Activated naive CD4-positive, alpha-beta T cell treated with anti-CD3 and anti-CD28 coated beads for 36 hours (primary cell): ENCODE measurements at regions of chrX and their contacts with region 1.

Region 1: GRCh38 chrX:22192417-22193060 is 80.2 kb upstream of the CBLL2 start:
- DNase-seq: peak; percentile 71
- H3K4me3 Mint-ChIP-seq: no peak overlapping the region
- H3K27ac Mint-ChIP-seq: no peak overlapping the region
- H3K4me1 Mint-ChIP-seq: peaks cover 3% of the 10 kb centered on the region
- H3K27me3 Mint-ChIP-seq: no peaks in the 10 kb centered on the region

Region 2: DNA sequence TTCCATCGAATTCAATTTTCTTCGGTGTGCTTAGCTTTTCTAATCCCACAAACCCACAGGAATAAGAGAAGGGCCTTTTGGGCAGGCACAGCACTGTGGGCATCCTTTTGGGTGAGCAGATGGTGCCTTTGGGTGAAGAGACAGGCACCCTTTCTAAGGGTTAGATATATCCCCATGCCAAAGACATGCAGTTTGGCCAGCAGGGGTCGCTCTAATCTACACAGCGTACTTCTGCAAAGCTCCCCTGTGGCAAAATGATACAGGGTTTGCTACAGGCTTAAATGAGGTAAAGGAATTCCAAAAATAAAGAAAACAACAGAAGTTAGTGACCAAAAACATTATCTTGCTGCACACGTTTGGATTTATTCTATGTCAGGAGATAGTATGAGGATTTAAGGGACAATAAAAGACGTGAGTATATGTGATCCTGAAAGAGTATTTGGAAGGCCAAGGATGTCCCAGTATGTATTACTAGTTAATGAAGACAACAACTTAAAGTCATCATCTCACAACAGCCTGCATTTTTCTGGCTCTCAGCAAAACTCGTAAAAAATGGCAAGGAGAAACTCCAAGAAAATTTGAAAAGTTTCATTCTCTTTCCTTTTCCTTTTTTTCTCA is 111.0 kb before region 1 on chrX:
- CTCF ChIA-PET with region 1: no interaction called
- intact Hi-C with region 1: loop called (anchors 5 kb)
- DNase-seq: peak; percentile 65
- H3K4me3 Mint-ChIP-seq: no peak overlapping the region
- H3K27ac Mint-ChIP-seq: no peak overlapping the region
- H3K4me1 Mint-ChIP-seq: peaks cover 7% of the 10 kb centered on the region
- H3K27me3 Mint-ChIP-seq: no peaks in the 10 kb centered on the region